A549 (cell line): ENCODE measurements at regions of chr4 and their contacts with region 1.

Region 1: DNA sequence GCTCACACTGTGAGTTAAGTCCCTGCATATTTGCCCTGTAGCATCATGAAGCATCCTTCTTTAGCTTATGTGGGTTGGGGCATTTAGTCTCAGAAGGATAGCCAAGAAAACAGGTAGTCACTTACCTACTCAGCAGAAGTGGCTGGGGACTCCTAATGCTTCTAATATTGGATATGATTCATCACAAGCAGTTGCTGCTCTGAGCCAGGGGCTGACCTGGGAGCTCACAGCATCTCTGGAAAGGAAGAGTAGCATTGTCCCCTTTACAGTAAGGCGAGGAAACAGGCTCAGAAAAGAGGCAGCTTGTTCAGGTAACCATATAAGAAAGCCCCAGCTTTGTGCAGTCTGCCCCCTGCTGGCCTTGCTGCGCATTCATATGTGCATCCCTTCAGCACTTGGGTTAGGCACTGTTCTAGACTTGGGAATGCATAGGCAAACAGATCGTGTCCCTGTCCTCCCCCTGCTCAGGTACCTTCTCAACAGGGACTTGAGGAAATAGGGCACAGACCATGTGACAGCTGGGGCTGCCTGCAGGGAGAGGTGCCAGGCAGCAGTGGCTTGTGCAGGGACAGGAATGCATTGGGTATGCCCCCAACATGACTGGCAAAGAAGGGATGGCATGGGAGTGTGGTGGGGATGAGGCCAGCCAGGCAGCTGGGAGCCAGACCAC is 35.7 kb upstream of the TBC1D14 start:
- DNase-seq: peak; percentile 30 to 65
- ATAC-seq: peak; percentile 84 to 93
- H3K4me3 ChIP-seq: no peak overlapping the region
- H3K27ac ChIP-seq: no peak overlapping the region
- H3K4me1 ChIP-seq: no peaks in the 10 kb centered on the region
- CTCF ChIP-seq: peak; percentile 67
- EP300 ChIP-seq: no peak
- POLR2A ChIP-seq: no peak
- RAD21 ChIP-seq: peak; percentile 66 to 71

Region 2: GRCh38 chr4:6362896-6363295 is 511.0 kb before region 1 on chr4:
- CTCF ChIA-PET with region 1: no interaction called
- POLR2A ChIA-PET with region 1: no interaction called
- DNase-seq: no peak
- ATAC-seq: no peak
- H3K4me3 ChIP-seq: no peak overlapping the region
- H3K27ac ChIP-seq: no peak overlapping the region
- H3K4me1 ChIP-seq: no peaks in the 10 kb centered on the region
- CTCF ChIP-seq: no peak
- EP300 ChIP-seq: no peak
- POLR2A ChIP-seq: no peak
- RAD21 ChIP-seq: no peak

Region 3: GRCh38 chr4:6620891-6621555 is 252.9 kb before region 1 on chr4:
- CTCF ChIA-PET with region 1: no interaction called
- POLR2A ChIA-PET with region 1: no interaction called
- DNase-seq: no peak
- ATAC-seq: peak; percentile 19 to 38; a peak in 3 of 6 replicates
- H3K4me3 ChIP-seq: no peak overlapping the region
- H3K27ac ChIP-seq: no peak overlapping the region
- H3K4me1 ChIP-seq: no peaks in the 10 kb centered on the region
- CTCF ChIP-seq: no peak
- EP300 ChIP-seq: no peak
- POLR2A ChIP-seq: no peak
- RAD21 ChIP-seq: no peak

Region 4: DNA sequence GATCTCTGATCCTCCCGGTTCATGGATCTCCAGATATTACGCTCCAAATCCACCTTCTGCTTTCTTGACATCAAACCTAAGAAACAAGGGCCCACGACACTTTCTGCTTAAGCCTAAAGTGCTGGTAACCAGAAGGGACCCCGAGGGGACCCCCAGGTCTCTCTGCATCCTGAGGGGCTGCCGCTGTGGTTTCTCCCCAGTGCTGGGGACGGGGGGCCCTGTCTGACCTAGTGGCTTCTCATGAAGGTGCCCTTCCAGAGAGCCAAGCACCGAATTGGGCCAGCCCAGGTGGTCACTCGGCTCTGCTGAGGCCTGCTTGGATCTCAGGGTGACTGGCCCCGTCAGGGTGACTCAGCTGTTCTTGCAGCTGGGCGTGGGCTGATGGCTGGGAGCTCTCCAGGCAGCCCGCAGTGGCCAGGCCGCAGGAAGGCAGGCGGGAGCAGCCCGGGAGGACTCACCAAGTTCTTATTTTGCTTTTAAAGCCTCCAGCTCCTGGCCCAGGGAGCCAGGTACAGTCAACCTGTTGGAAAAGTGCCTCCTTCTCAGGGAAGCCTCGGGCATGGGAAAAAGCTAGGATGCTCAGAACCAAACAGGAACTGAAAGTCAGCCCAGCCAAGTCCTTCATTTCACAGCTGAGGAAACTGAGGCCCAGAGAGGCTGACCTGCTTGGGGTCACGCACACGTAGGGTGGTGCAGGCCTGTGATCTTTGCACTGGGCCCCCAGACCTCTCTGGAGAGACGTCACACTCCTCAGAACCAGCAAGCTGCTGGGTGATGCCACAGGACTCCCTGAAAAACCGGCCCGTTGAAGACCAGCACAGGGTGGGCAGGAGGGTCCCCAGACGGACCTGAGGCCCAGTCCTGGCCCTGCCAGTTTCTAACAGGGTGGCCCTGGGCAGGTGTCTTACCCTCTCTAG is 141.2 kb before region 1 on chr4:
- CTCF ChIA-PET with region 1: interaction called, 16 read pairs
- POLR2A ChIA-PET with region 1: no interaction called
- DNase-seq: peak; percentile 69 to 89
- ATAC-seq: peak; percentile 97 to 98
- H3K4me3 ChIP-seq: no peak overlapping the region
- H3K27ac ChIP-seq: peak overlapping the region; percentile 99 to 100
- H3K4me1 ChIP-seq: peaks cover 19% of the 10 kb centered on the region
- CTCF ChIP-seq: no peak
- EP300 ChIP-seq: 0 out of 5 replicates have a peak, but pooled peaks of 1 of the 2 experiments have one; percentile 15
- POLR2A ChIP-seq: no peak
- RAD21 ChIP-seq: no peak

Region 5: GRCh38 chr4:6794189-6794588 is 79.7 kb before region 1 on chr4:
- CTCF ChIA-PET with region 1: interaction called, 17 read pairs
- POLR2A ChIA-PET with region 1: no interaction called
- DNase-seq: no peak
- ATAC-seq: no peak
- H3K4me3 ChIP-seq: no peak overlapping the region
- H3K27ac ChIP-seq: no peak overlapping the region
- H3K4me1 ChIP-seq: peaks cover 21% of the 10 kb centered on the region
- CTCF ChIP-seq: no peak
- EP300 ChIP-seq: no peak
- POLR2A ChIP-seq: no peak
- RAD21 ChIP-seq: no peak

Region 6: GRCh38 chr4:6845027-6845426 is 28.9 kb before region 1 on chr4:
- CTCF ChIA-PET with region 1: interaction called, 17 read pairs
- POLR2A ChIA-PET with region 1: no interaction called
- DNase-seq: no peak
- ATAC-seq: no peak
- H3K4me3 ChIP-seq: no peak overlapping the region
- H3K27ac ChIP-seq: no peak overlapping the region
- H3K4me1 ChIP-seq: peaks cover 3% of the 10 kb centered on the region; the same call in 1 of the 3 replicates
- CTCF ChIP-seq: no peak
- EP300 ChIP-seq: no peak
- POLR2A ChIP-seq: no peak
- RAD21 ChIP-seq: no peak

Region 7: GRCh38 chr4:6859543-6859942 is 14.4 kb before region 1 on chr4:
- CTCF ChIA-PET with region 1: interaction called, 26 read pairs
- POLR2A ChIA-PET with region 1: no interaction called
- DNase-seq: no peak
- ATAC-seq: no peak
- H3K4me3 ChIP-seq: no peak overlapping the region
- H3K27ac ChIP-seq: no peak overlapping the region
- H3K4me1 ChIP-seq: peaks cover 26% of the 10 kb centered on the region
- CTCF ChIP-seq: no peak
- EP300 ChIP-seq: no peak
- POLR2A ChIP-seq: no peak
- RAD21 ChIP-seq: no peak